Colonic mucosa (tissue), 4 donors: ENCODE measurements at regions of chr10 and their contacts with region 1.

Region 1: DNA sequence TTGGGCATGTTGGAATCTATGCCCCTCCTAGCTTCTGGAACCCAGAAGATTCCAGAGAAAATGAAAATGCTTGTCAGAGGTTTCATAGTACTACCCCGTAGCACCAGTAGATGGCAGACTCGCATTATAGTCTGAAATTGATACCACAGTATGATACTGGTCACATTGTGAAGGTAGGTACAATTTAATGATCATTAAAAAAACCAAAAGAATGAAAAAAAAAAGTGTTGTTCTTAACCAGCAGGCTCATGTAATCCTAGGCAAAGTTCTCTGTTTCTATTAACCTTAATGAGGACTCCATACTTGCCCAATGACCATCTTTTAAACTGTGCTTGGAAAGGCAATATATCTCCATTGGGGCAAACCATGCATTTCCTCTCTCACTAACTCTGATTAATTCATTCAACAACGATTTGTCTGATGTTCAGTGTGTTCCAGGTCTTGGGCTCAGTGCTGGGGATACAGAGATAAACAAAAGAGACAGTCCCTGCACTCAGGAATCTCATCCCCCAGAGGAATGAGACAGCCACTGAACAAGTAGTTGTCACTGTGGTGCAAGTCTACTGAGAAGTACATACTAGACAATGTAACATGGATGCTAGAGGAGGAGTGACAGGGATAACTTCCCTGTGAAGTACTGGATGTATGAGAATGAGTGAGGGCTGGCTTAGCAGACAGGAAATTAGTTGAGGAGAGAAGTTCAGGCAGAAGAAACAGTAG is 223.5 kb upstream of the PHYHIPL start:
- DNase-seq: peak; percentile 63
- H3K4me3 ChIP-seq: no peak overlapping the region
- H3K27ac ChIP-seq: peak overlapping the region; percentile 14
- H3K4me1 ChIP-seq: no peaks in the 10 kb centered on the region
- H3K27me3 ChIP-seq: no peaks in the 10 kb centered on the region
- CTCF ChIP-seq: peak; percentile 54

Region 2: GRCh38 chr10:59181668-59182067 is 228.8 kb after region 1 on chr10:
- intact Hi-C with region 1: loop called (anchors 2 kb)
- DNase-seq: no peak
- H3K4me3 ChIP-seq: no peak overlapping the region
- H3K27ac ChIP-seq: no peak overlapping the region
- H3K4me1 ChIP-seq: no peaks in the 10 kb centered on the region
- H3K27me3 ChIP-seq: peaks cover 4% of the 10 kb centered on the region
- CTCF ChIP-seq: peak; percentile 41

Region 3: GRCh38 chr10:59625721-59626522 is 673.0 kb after region 1 on chr10:
- intact Hi-C with region 1: loop called (anchors 5 kb)
- DNase-seq: peak; percentile 37
- H3K4me3 ChIP-seq: no peak overlapping the region
- H3K27ac ChIP-seq: no peak overlapping the region
- H3K4me1 ChIP-seq: peaks cover 4% of the 10 kb centered on the region
- H3K27me3 ChIP-seq: no peaks in the 10 kb centered on the region
- CTCF ChIP-seq: peak; percentile 68